A673 (cell line): ENCODE measurements at regions of chr11 and their contacts with region 1.

Region 1: DNA sequence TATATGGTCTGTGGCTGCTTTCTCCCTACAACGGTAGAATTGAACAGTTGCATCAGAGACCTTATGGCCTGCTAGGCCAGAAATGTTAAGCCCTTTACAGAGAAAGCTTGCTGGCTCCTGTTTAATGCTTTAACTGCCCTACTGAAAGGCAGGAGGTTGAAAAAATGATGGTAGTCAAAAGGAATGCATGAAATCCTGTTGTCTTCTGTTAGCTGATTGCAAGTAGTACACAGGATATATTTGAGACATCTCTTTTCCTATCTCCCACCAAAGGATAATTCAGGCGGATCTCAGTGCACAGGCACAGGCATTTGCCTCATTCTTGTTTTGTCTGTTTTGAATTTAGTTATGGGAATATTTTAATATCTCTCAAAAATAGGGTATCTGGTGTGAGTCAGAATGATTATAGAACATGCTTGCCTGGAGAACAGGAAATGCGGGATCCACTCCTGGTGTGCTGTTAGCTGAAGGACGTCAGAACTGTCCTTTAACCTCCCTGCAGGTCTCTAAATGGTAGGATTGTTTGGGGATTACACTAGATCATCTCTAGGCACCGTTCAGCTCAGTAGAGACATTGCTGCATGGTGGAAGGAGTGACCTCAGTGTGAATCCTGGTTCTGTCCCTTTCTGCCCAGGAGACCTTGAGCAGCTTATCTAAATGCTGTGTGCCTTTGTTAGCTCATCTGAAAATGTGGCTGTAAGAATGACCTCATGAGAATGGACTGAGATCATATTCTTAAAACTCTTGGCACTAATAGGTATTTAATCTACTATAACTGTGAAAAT is 49.5 kb downstream of the PACS1 start:
- DNase-seq: peak; percentile 95
- H3K4me3 ChIP-seq: peak overlapping the region; percentile 3
- H3K27ac ChIP-seq: peak overlapping the region; percentile 92
- H3K4me1 ChIP-seq: peaks cover 64% of the 10 kb centered on the region
- H3K27me3 ChIP-seq: no peaks in the 10 kb centered on the region
- CTCF ChIP-seq: no peak

Region 2: GRCh38 chr11:65111744-65112414 is 1007.7 kb before region 1 on chr11 and contains the start of gene TM7SF2:
- CTCF ChIA-PET with region 1: no interaction called
- POLR2A ChIA-PET with region 1: no interaction called
- intact Hi-C with region 1: no loop called
- DNase-seq: peak; percentile 99
- H3K4me3 ChIP-seq: peak within 1 kb of the TSS; percentile 80
- H3K27ac ChIP-seq: peak within 1 kb of the TSS; percentile 75
- H3K4me1 ChIP-seq: peaks cover 27% of the 10 kb centered on the region
- H3K27me3 ChIP-seq: no peaks in the 10 kb centered on the region
- CTCF ChIP-seq: no peak
- total RNA-seq, gene TM7SF2: 37.8 and 50.5 TPM in 2 replicates

Region 3: GRCh38 chr11:66069715-66070603 is 49.6 kb before region 1 on chr11 and contains the start of gene PACS1:
- CTCF ChIA-PET with region 1: no interaction called
- POLR2A ChIA-PET with region 1: no interaction called
- intact Hi-C with region 1: loop called (anchors 5 kb)
- DNase-seq: peak; percentile 86
- H3K4me3 ChIP-seq: peak within 1 kb of the TSS; percentile 84
- H3K27ac ChIP-seq: peak within 1 kb of the TSS; percentile 87
- H3K4me1 ChIP-seq: peaks cover 34% of the 10 kb centered on the region
- H3K27me3 ChIP-seq: no peaks in the 10 kb centered on the region
- CTCF ChIP-seq: no peak
- total RNA-seq, gene PACS1: 75.7 and 79.1 TPM in 2 replicates

Region 4: GRCh38 chr11:66080055-66080817 is 39.3 kb before region 1 on chr11:
- CTCF ChIA-PET with region 1: no interaction called
- POLR2A ChIA-PET with region 1: interaction called, 10 read pairs
- intact Hi-C with region 1: no loop called
- DNase-seq: peak; percentile 69
- H3K4me3 ChIP-seq: no peak overlapping the region
- H3K27ac ChIP-seq: no peak overlapping the region
- H3K4me1 ChIP-seq: peaks cover 45% of the 10 kb centered on the region
- H3K27me3 ChIP-seq: no peaks in the 10 kb centered on the region
- CTCF ChIP-seq: no peak

Region 5: GRCh38 chr11:66100272-66101065 is 19.1 kb before region 1 on chr11:
- CTCF ChIA-PET with region 1: no interaction called
- POLR2A ChIA-PET with region 1: no interaction called
- intact Hi-C with region 1: no loop called
- DNase-seq: no peak
- H3K4me3 ChIP-seq: no peak overlapping the region
- H3K27ac ChIP-seq: peak overlapping the region; percentile 10
- H3K4me1 ChIP-seq: peaks cover 20% of the 10 kb centered on the region
- H3K27me3 ChIP-seq: no peaks in the 10 kb centered on the region
- CTCF ChIP-seq: no peak

Region 6: DNA sequence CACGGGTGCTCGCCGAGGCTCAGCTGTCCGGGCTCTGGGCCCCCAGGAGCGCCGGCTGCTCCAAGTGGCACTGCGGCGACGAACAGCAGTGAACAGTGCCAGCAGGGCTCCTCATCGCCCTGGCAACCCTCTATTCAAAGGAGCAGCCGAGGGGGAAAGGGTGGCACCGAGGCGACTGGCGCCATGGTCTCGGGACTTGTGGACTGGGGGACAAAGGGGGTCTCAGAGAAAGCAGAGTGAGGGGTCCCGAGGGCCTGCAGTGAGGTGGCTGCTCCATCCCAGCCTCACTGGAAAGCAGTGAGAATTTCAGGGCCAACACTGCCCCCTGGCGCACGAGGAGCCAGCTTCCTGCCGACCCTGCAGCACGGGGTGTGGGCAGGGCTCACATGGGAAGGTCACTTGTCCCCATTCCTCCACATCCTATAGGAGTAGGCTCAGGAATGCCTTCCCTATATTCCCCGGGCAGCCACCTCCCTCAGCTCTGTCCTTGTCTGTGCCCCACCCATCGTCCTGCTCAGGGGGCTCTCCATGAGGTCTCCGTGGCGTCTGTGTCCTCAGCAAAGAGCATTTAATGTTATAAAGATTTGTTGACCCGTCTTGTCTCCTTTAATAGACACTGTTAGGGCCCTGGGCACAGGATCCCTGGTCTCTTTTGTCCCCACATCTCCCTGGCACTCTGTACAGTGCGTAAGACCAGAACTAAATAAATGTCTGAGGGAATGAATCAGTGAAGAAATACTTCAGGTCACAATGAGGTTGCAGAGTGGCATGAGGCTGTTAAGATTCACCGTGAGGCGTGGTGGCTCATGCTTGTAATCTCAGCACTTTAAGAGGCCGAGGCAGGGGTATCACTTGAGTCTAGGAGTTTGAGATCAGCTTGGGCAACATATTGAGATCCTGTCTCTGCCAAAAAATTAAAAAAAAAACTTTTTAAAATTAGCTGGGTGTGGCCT is 763.8 kb after region 1 on chr11:
- CTCF ChIA-PET with region 1: no interaction called
- POLR2A ChIA-PET with region 1: interaction called, 16 read pairs
- intact Hi-C with region 1: no loop called
- DNase-seq: peak; percentile 80
- H3K4me3 ChIP-seq: peak overlapping the region; percentile 25
- H3K27ac ChIP-seq: no peak overlapping the region
- H3K4me1 ChIP-seq: peaks cover 33% of the 10 kb centered on the region
- H3K27me3 ChIP-seq: no peaks in the 10 kb centered on the region
- CTCF ChIP-seq: peak; percentile 95